ENCODE measurements at regions of chr11 and their contacts with region 1.

Region 1: DNA sequence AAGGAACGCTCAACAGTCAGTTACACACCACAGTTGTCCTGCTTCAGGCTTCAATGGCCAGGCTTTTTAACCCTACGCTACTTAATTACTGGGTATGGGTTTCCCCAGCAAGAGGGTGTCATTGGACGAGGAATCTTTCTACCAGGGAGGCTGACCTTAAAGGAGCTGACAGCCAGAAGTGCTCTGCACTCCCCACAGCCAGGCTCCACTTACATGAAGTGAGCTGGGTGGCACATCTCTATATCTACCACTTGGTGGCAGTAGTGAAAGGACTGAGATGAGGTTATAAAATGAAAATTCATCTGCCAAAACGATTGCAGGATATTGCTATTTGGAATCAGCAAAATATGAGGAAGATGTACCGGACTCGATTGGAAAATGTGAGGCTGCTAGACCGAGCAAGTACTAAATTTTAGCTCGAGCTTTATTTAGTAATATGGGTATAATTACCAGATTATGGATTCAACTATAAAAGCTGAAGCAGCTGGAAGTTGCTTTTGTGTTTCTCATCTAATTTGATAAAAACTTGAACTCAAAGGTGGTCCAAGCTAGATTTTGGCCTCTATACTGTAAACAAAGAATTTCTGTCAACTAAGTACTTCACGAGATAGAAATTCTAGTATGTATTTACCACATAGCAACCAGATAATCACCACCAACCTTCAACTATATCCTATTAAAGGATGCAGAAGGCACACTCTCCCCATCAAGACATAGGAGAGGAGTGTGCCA is 53.9 kb upstream of the CEP126 start:
- DNase-seq: peak; percentile 17 to 57 (median 52)
- ATAC-seq: peak; percentile 90 to 91
- H3K4me3 ChIP-seq: no peak overlapping the region
- H3K27ac ChIP-seq: no peak overlapping the region
- H3K4me1 ChIP-seq: no peaks in the 10 kb centered on the region
- H3K27me3 ChIP-seq: no peaks in the 10 kb centered on the region

Region 2: DNA sequence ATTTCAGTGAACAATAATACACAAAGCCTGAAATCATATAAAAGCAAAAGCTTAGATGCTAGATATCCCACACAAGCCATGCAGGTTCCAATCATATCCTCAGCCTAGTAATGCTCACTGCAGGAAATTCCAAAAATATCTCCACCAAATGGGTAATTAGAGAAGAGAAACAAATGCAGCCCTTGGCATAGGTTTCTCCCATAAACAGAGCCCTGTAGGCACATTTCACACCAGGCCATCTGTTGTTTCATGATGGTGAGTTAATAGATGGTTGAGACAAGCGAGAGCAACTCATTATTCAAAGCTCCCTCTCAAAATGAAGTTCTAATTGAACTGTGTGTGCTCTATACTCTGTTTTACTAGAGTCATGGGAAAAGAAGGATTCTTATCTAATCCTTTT is 122.4 kb before region 1 on chr11:
- intact Hi-C with region 1: no loop called
- DNase-seq: no peak
- ATAC-seq: no peak
- H3K4me3 ChIP-seq: no peak overlapping the region
- H3K27ac ChIP-seq: no peak overlapping the region
- H3K4me1 ChIP-seq: no peaks in the 10 kb centered on the region
- H3K27me3 ChIP-seq: no peaks in the 10 kb centered on the region

Region 3: DNA sequence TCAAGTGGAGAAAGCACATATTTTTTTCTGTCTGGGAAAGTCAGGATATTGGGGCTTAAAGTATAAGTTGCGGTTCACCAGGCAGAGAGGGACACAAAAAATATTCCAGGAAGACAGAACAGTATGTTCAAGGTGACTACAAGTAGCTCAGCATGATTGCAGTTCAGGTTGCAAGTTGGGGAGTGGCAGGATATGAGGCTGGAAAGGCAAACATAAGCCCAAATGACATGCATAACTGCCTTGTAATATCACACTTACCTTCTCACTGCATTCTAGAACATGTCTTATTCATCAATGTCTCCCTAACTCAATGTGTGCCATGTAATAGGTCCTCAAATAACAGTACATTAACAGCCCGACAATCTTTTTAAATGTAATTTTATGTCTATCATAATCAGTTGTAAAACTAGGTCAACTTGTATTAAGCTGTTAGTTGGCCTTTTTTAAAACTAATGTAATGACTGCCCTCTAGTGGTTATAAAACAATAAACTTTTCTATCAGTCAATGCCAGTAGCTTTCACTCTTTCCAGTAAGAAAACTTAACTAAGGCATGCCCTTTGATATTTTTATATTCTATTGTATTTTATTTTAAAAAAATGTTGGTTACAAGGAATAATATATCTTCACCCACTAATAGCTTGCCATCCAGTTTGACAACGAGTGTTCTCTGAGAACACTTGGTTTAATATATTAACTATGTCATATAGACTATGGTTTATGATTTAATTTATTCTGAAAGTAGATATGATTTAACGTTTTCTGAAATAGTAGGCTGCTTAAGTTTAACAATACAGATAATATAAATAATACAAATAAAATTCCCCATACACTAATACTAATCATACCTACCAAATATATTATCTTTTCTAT is 146.9 kb after region 1 on chr11:
- intact Hi-C with region 1: loop called (anchors 2 to 5 kb)
- DNase-seq: no peak
- ATAC-seq: peak; percentile 51 to 57
- H3K4me3 ChIP-seq: no peak overlapping the region
- H3K27ac ChIP-seq: no peak overlapping the region
- H3K4me1 ChIP-seq: no peaks in the 10 kb centered on the region
- H3K27me3 ChIP-seq: no peaks in the 10 kb centered on the region

Region 4: GRCh38 chr11:102666331-102666957 is 805.6 kb after region 1 on chr11:
- intact Hi-C with region 1: loop called in 1 of 4 experiments (anchors 10 kb)
- DNase-seq: no peak
- ATAC-seq: peak; percentile 45 to 57
- H3K4me3 ChIP-seq: no peak overlapping the region
- H3K27ac ChIP-seq: no peak overlapping the region
- H3K4me1 ChIP-seq: no peaks in the 10 kb centered on the region
- H3K27me3 ChIP-seq: no peaks in the 10 kb centered on the region

Measured in right cardiac atrium (tissue), 5 donors.